Ovary (tissue), 10 donors: ENCODE measurements at regions of chr16 and their contacts with region 1.

Region 1: GRCh38 chr16:19700319-19700781 is 17.7 kb downstream of the KNOP1 start:
- DNase-seq: peak; percentile 51 to 66 (median 57)
- H3K4me3 ChIP-seq: no peak overlapping the region
- H3K27ac ChIP-seq: peak overlapping the region; percentile 27 to 58
- H3K4me1 ChIP-seq: peaks cover 50% of the 10 kb centered on the region
- H3K27me3 ChIP-seq: no peaks in the 10 kb centered on the region
- CTCF ChIP-seq: no peak
- EP300 ChIP-seq: no peak
- POLR2A ChIP-seq: no peak

Region 2: GRCh38 chr16:19613834-19614233 is 86.5 kb before region 1 on chr16:
- intact Hi-C with region 1: loop called in 1 of 4 experiments (anchors 10 kb)
- DNase-seq: no peak
- H3K4me3 ChIP-seq: no peak overlapping the region
- H3K27ac ChIP-seq: no peak overlapping the region
- H3K4me1 ChIP-seq: peaks cover 14% of the 10 kb centered on the region
- H3K27me3 ChIP-seq: no peaks in the 10 kb centered on the region
- CTCF ChIP-seq: no peak
- EP300 ChIP-seq: no peak
- POLR2A ChIP-seq: no peak

Region 3: DNA sequence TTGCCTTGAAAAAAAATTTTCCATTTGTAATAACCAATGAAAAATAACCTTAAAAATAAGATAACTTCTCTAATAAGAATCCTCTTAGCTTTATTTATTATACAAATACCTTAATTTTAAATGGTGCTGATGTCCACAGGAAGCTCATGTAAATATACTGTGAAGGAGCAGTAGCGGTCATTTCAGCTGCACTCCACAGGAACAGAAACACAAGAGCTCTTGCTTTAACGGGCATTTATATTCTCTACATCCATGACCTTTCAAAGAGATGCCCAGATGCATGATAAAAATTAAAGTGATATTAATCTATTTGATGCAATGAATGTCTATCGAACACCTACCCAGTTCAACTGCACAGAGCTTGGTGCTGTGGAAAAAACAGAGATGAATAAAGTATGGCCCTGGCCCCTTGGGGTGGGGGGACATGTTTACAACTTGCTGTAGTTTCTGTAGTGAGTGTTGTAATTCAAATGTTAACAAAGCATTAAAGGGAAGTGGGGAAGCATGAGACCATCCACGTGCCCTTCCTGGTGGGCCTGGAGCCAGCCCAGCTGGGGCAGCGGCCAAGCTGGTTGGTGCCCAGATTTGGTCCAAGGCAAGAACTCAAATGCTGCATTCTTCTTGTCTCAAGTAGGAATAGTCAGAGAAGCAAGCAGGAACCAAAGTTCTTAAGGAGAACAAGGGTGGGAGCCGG is 65.7 kb after region 1 on chr16:
- intact Hi-C with region 1: no loop called
- DNase-seq: peak in 1 of 5 donors; percentile 42
- H3K4me3 ChIP-seq: no peak overlapping the region
- H3K27ac ChIP-seq: no peak overlapping the region
- H3K4me1 ChIP-seq: peaks cover 2% of the 10 kb centered on the region
- H3K27me3 ChIP-seq: no peaks in the 10 kb centered on the region
- CTCF ChIP-seq: no peak
- EP300 ChIP-seq: no peak
- POLR2A ChIP-seq: no peak